Activated T-helper 1 cell treated with anti-CD3 and anti-CD28 coated beads, Interleukin-12 subunit alpha, Interleukin-12 subunit beta, Interleukin-2, Interleukin-4 antibody, amounts not matched to agents 30 ng/mL and 10 ng/mL and 1 ng/mL, durations not matched to agents 14 hours and 24 hours and 36 hours (primary cell): ENCODE measurements at regions of chr11 and their contacts with region 1.

Region 1: GRCh38 chr11:777288-778255 is at the start of gene GATD1:
- DNase-seq: peak; percentile 94
- H3K4me3 Mint-ChIP-seq: peak within 1 kb of the TSS; percentile 84
- H3K27ac Mint-ChIP-seq: peak within 1 kb of the TSS; percentile 53
- H3K4me1 Mint-ChIP-seq: peaks cover 14% of the 10 kb centered on the region
- H3K27me3 Mint-ChIP-seq: no peaks in the 10 kb centered on the region
- total RNA-seq, gene GATD1: 70.4 and 81.7 TPM in 2 replicates

Region 2: DNA sequence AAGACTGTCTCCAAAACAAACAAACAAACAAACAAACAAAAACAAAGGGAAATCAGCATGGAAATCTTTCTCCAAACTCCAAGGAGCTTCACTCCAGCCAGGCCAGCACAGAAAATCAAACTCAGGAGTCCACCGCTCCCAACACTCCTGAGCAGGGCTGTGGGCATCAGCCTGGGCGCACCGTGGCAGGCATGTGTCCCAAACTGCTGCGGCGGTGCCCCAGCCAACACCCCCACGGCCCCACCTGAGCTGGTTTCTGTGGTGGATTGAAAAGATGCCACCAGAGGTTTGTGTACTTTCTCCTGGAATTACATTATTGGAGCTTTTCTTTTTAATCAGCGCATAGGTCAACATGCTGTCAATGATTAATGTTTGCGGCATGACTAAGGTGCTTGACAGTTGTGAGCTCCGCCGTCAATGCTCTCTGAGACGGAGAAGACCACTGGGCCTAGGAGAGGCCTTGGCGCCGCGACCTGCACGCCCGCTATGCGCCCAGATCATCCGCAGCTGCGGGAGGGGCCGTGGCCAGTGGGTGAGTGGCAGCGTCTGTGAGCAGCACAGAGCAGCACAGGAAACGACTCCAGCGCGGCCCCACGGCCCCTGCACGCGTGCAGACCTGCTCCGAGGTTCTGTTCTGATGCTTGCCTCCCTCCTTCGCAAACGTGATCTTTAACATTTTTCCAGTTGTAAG is 122.4 kb before region 1 on chr11:
- intact Hi-C with region 1: no loop called
- DNase-seq: no peak
- H3K4me3 Mint-ChIP-seq: no peak overlapping the region
- H3K27ac Mint-ChIP-seq: no peak overlapping the region
- H3K4me1 Mint-ChIP-seq: no peaks in the 10 kb centered on the region
- H3K27me3 Mint-ChIP-seq: no peaks in the 10 kb centered on the region

Region 3: DNA sequence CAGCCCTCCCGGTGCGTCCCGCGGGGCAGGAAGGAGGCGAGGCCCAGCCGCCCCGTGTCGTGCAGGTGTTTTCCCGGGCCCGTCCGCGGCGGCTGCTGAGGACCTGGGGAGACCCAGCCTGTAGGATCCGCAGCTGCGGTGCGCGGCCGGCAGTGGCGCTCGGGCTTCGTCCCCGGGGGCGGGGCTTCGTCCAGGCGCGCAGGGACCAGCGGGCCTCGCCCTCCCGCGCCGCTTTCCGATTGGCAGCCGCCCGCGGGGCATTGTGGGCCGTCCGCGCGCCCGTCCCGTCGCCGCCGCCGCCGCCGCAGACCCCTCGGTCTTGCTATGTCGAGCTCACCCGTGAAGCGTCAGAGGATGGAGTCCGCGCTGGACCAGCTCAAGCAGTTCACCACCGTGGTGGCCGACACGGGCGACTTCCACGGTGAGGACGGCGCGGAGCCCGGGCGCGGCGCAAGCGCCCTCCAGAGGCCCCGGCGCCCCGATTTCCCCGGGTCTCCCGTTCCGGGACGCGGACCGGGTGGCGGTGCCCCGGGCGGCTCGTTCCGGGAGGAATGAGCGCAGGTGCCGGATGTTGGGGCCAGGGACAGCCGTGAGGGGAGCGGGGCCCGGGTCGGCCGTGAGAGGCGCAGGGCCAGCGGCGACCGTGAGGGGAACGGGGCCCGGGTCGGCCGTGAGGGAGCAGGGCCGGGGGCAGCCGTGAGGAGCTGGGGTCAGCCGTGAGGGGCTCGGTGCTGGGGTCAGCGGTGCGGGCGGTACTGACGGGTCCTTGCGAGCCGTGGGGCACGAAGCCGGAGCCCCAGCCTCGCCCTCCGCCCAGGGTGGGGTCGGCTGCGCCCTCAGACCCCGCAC is 30.2 kb before region 1 on chr11 and contains the start of gene TALDO1:
- intact Hi-C with region 1: loop called (anchors 1 kb)
- DNase-seq: peak; percentile 88
- H3K4me3 Mint-ChIP-seq: peak within 1 kb of the TSS; percentile 91
- H3K27ac Mint-ChIP-seq: peak within 1 kb of the TSS; percentile 90
- H3K4me1 Mint-ChIP-seq: peaks cover 25% of the 10 kb centered on the region
- H3K27me3 Mint-ChIP-seq: no peaks in the 10 kb centered on the region
- total RNA-seq, gene TALDO1: 269 and 283 TPM in 2 replicates